Transverse colon (tissue), 4 donors: ENCODE measurements at regions of chr3 and their contacts with region 1.

Region 1: DNA sequence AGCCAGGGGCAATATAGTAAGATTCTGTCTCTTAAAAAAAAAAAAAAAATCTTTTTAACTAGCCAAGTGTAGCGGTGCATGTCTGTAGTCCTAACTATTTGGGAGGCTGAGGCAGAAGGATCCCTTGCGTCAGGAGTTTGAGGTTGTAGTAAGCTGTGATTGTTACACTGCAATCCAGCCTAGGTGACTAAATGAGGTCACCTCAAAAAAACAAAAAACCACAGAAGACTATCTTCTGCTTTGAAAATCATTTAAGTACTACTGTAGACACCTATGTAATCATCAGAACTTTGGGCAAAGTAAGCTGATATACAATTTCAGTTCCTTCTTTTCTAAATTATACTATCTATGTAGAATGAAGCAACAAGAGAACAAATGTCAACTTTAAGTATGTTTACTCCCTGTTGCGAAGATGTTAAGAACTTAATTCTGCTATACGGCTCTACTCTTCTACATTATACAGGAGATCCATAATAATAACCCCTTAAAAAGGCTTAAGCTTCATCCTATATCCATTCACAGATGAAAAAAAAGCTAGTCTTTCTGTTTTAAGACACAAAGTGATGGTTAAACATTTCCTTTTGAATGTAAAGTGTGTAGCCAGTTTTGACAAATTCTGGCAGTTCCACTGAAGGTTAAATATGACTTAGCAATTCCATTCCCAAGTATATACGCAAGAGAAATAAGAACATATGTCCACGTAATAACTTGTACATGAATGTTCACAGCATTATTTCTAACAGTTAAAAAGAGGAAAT is 15.2 kb downstream of the DAZL start:
- DNase-seq: no peak
- H3K4me3 ChIP-seq: no peak overlapping the region
- H3K27ac ChIP-seq: no peak overlapping the region
- H3K4me1 ChIP-seq: no peaks in the 10 kb centered on the region
- H3K27me3 ChIP-seq: no peaks in the 10 kb centered on the region
- CTCF ChIP-seq: no peak
- EP300 ChIP-seq: no peak
- POLR2A ChIP-seq: no peak

Region 2: DNA sequence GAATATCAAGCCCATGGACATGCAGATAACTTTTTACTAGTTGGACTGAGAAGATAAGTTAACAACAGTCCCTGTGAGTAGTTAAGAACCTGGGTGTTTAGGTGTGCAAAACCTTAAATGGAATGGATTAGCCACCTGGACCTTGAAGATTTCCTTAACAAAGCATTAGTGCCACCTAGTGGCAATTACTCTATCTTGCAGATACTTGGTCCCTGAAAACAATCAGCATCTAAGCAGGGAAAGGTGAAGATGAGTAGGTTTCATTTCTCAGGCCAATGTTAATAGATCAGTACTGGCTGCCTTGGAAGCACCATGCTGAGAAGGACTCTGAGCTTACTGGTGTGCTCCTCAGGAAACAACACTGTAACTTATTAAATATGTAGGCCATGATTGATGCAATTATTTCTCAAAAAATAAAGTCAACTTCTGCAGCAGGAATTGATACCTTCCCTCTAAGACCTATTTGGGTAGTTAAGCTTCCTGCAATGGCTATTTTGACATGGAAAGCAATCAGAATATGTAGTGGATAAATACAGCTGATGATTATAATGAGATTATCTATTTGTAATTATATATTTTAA is 823.0 kb after region 1 on chr3:
- in situ Hi-C with region 1: loop called in 2 of 4 experiments (anchors 25 kb)
- intact Hi-C with region 1: no loop called
- DNase-seq: no peak
- H3K4me3 ChIP-seq: no peak overlapping the region
- H3K27ac ChIP-seq: no peak overlapping the region
- H3K4me1 ChIP-seq: no peaks in the 10 kb centered on the region
- H3K27me3 ChIP-seq: no peaks in the 10 kb centered on the region
- CTCF ChIP-seq: peak; percentile 60 to 72 (median 69)
- EP300 ChIP-seq: no peak
- POLR2A ChIP-seq: no peak

Region 3: GRCh38 chr3:17562845-17563244 is 972.8 kb after region 1 on chr3:
- in situ Hi-C with region 1: no loop called
- intact Hi-C with region 1: no loop called
- DNase-seq: no peak
- H3K4me3 ChIP-seq: no peak overlapping the region
- H3K27ac ChIP-seq: no peak overlapping the region
- H3K4me1 ChIP-seq: no peaks in the 10 kb centered on the region
- H3K27me3 ChIP-seq: no peaks in the 10 kb centered on the region
- CTCF ChIP-seq: no peak
- EP300 ChIP-seq: no peak
- POLR2A ChIP-seq: no peak